CD8-positive, alpha-beta memory T cell (primary cell): ENCODE measurements at regions of chr6 and their contacts with region 1.

Region 1: GRCh38 chr6:107674995-107675738 is 148.9 kb downstream of the SCML4 start:
- DNase-seq: peak; percentile 79 to 92 (median 83)
- H3K4me3 ChIP-seq: no peak overlapping the region
- H3K4me3 Mint-ChIP-seq: peak overlapping the region in 6 of 7 donors; percentile 45 to 81 (median 74)
- H3K27ac ChIP-seq: no peak overlapping the region
- H3K27ac Mint-ChIP-seq: peak overlapping the region in 7 of 8 donors; percentile 6 to 93 (median 88)
- H3K4me1 ChIP-seq: peaks cover 5% of the 10 kb centered on the region
- H3K4me1 Mint-ChIP-seq: peaks cover 10 to 19% (median 17%) of the 10 kb centered on the region in 3 donors
- H3K27me3 ChIP-seq: no peaks in the 10 kb centered on the region
- H3K27me3 Mint-ChIP-seq: peaks cover 0 to 2% of the 10 kb centered on the region in 2 donors

Region 2: DNA sequence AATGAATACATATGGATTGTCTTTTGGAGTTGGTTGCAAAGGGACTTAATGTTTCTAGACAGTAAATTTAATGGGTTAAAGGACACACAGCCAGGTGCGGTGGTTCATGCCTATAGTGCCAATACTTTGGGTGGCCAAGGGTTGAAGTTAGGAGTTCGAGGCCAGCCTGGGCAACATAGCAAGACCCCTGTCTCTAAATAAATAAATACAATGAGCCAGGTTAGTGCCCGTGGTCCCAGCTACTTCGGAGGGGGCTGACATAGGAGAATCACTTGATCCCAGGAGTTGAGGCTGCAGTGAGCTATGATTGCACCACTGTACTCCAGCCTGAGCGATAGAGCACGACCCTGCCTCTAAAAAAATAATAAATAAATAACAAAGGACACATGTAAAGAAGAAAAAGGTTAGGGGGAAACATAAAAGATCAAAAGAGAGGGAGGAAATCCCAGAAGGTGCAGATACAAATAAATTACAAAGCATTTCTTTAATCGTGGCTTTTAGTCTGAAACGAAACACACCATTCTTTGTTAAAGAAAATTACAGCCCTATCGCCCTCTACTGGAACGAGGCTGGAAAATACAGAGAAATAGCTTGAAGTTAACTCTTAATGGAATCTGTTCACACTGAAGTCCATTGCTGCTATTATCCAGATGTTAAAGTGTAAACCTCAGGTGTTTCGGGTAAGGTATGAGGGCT is 191.6 kb after region 1 on chr6:
- CTCF ChIA-PET with region 1: interaction called, 31 read pairs
- POLR2A ChIA-PET with region 1: no interaction called
- DNase-seq: peak in 2 of 5 donors; percentile 32 to 50
- H3K4me3 ChIP-seq: no peak overlapping the region
- H3K4me3 Mint-ChIP-seq: peak overlapping the region in 1 of 7 donors; percentile 22
- H3K27ac ChIP-seq: no peak overlapping the region
- H3K27ac Mint-ChIP-seq: peak overlapping the region in 1 of 8 donors; percentile 32
- H3K4me1 ChIP-seq: peaks cover 3% of the 10 kb centered on the region
- H3K4me1 Mint-ChIP-seq: peaks cover 2 to 9% (median 6%) of the 10 kb centered on the region in 3 donors
- H3K27me3 ChIP-seq: peaks cover 4% of the 10 kb centered on the region
- H3K27me3 Mint-ChIP-seq: peaks cover 2 to 13% of the 10 kb centered on the region in 2 donors